Activated naive CD4-positive, alpha-beta T cell treated with anti-CD3 and anti-CD28 coated beads for 36 hours (primary cell): ENCODE measurements at regions of chr11 and their contacts with region 1.

Region 1: GRCh38 chr11:36289226-36289852 is at the start of gene COMMD9:
- DNase-seq: peak; percentile 98
- H3K4me3 Mint-ChIP-seq: peak within 1 kb of the TSS; percentile 91
- H3K27ac Mint-ChIP-seq: peak within 1 kb of the TSS; percentile 78
- H3K4me1 Mint-ChIP-seq: peaks cover 34% of the 10 kb centered on the region
- H3K27me3 Mint-ChIP-seq: no peaks in the 10 kb centered on the region
- total RNA-seq, gene COMMD9: 28.9 to 30.9 TPM

Region 2: GRCh38 chr11:35927730-35928129 is 361.6 kb before region 1 on chr11:
- CTCF ChIA-PET with region 1: no interaction called
- intact Hi-C with region 1: no loop called
- DNase-seq: no peak
- H3K4me3 Mint-ChIP-seq: no peak overlapping the region
- H3K27ac Mint-ChIP-seq: no peak overlapping the region
- H3K4me1 Mint-ChIP-seq: no peaks in the 10 kb centered on the region
- H3K27me3 Mint-ChIP-seq: peaks cover 16% of the 10 kb centered on the region

Region 3: DNA sequence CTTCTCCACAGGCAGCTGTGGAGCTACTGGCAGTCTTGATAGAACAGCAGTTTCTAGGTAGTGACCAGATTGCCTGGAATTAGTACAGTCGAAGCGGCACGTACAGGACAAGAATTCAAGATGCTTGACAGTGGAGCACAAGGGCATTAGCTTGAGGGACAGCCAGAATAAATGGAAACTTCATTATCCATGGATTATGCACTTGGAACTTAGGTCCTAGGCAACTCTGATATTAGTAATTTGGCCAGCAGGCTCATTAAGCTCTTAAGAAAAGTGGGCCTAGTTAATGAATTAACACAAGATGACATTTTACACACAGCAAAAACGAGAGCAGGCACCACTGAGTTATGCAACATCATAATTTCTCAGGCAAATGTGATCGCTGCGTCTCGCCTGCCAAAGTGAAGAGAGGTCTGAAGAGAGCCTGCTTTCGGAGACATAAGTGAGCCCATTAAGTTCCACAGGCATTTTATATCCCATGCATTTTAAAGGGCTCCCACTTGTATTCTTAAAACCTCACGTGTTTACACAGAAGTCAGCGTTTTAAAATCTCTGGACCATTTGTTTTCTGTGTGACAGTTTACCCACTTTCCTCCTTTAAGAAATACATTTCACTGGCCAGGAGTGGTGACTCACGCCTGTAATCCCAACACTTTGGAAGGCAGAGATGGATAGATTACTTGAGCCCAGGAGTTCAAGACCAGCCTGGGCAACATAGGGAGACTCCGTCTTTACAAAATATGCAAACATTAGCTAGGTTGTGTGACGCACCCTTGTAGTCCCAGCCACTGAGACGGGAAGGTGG is 66.3 kb before region 1 on chr11:
- CTCF ChIA-PET with region 1: no interaction called
- intact Hi-C with region 1: no loop called
- DNase-seq: no peak
- H3K4me3 Mint-ChIP-seq: no peak overlapping the region
- H3K27ac Mint-ChIP-seq: no peak overlapping the region
- H3K4me1 Mint-ChIP-seq: no peaks in the 10 kb centered on the region
- H3K27me3 Mint-ChIP-seq: peaks cover 4% of the 10 kb centered on the region

Region 4: DNA sequence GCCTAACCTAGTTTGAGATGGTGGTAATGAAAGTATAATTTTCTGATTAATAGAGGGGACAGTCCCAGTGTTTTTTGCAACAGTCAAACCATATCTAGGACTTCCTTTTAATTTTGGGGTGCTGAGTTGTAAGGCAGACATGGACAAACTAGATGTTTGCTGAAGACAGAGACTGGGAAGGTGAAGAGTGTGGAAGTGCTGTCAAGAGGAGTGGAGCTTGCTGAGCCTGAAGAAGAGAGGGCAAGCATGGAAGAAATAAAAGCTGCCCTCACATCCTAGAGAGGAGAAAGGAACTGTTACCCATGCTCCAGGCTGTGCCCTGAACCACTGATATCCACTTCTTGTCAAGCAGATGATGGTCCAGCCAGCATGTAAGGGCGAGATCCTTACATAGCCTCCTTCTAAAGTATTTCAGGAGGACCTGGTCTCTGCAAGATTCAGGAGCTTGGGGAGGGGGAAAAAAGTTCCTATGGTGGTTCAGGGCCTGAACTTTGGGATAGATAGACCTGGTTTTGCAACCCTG is 58.1 kb after region 1 on chr11:
- CTCF ChIA-PET with region 1: interaction called, 5 read pairs
- intact Hi-C with region 1: loop called (anchors 1 kb)
- DNase-seq: no peak
- H3K4me3 Mint-ChIP-seq: no peak overlapping the region
- H3K27ac Mint-ChIP-seq: peak overlapping the region; percentile 73
- H3K4me1 Mint-ChIP-seq: peaks cover 48% of the 10 kb centered on the region
- H3K27me3 Mint-ChIP-seq: peaks cover 18% of the 10 kb centered on the region

Region 5: GRCh38 chr11:36361901-36362391 is 72.6 kb after region 1 on chr11:
- CTCF ChIA-PET with region 1: no interaction called
- intact Hi-C with region 1: no loop called
- DNase-seq: no peak
- H3K4me3 Mint-ChIP-seq: no peak overlapping the region
- H3K27ac Mint-ChIP-seq: no peak overlapping the region
- H3K4me1 Mint-ChIP-seq: peaks cover 12% of the 10 kb centered on the region
- H3K27me3 Mint-ChIP-seq: peaks cover 45% of the 10 kb centered on the region

Region 6: DNA sequence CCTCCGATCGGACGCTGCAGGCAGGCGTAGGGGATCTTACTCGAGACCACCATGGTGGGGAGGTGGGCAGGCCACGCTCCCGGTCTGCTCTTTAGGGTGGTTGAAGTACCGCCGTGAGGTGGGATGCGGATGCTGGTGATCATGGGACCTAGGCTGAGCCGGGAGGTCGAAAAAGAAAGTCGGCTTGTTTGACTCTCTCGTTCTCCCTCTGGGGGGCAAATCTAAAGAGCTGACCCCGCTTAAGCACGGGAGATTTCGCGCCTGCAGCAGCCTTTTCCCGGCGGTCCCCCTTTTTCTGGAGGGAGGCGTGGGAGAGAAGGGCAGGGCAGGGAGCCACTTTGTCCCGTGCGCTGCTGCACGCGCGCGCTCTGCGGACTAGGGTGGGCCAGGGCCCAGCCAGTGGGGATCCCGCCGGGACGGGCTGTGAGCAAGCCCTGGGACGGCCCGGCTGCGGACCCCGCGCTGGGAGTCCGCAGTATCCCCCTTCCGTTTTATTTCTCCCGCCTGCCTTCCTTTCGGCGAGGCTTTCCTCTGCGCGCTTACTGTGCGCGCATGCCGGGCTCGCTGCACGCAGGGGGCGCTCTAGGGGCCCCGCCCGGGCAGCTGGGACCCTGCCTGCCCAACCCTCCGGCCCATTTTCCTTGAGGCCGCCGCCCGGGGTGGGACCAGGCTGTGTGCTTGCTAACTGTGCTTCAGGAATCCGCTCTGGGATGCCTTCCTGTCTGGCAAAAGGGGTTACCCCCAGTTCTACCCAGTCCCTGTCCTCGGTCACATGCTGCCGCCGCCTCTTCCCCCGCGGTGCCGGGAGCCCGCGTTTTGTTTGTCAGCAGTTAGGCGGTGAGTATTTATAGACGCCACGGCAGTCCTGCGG is 87.8 kb after region 1 on chr11:
- CTCF ChIA-PET with region 1: interaction called, 11 read pairs
- intact Hi-C with region 1: no loop called
- DNase-seq: peak; percentile 60
- H3K4me3 Mint-ChIP-seq: peak overlapping the region; percentile 85
- H3K27ac Mint-ChIP-seq: no peak overlapping the region
- H3K4me1 Mint-ChIP-seq: peaks cover 24% of the 10 kb centered on the region
- H3K27me3 Mint-ChIP-seq: peaks cover 64% of the 10 kb centered on the region

Region 7: GRCh38 chr11:36492724-36493304 is 203.5 kb after region 1 on chr11:
- CTCF ChIA-PET with region 1: interaction called, 98 read pairs
- intact Hi-C with region 1: loop called (anchors 1 kb)
- DNase-seq: peak; percentile 44
- H3K4me3 Mint-ChIP-seq: no peak overlapping the region
- H3K27ac Mint-ChIP-seq: peak overlapping the region; percentile 28
- H3K4me1 Mint-ChIP-seq: peaks cover 22% of the 10 kb centered on the region
- H3K27me3 Mint-ChIP-seq: no peaks in the 10 kb centered on the region

Region 8: DNA sequence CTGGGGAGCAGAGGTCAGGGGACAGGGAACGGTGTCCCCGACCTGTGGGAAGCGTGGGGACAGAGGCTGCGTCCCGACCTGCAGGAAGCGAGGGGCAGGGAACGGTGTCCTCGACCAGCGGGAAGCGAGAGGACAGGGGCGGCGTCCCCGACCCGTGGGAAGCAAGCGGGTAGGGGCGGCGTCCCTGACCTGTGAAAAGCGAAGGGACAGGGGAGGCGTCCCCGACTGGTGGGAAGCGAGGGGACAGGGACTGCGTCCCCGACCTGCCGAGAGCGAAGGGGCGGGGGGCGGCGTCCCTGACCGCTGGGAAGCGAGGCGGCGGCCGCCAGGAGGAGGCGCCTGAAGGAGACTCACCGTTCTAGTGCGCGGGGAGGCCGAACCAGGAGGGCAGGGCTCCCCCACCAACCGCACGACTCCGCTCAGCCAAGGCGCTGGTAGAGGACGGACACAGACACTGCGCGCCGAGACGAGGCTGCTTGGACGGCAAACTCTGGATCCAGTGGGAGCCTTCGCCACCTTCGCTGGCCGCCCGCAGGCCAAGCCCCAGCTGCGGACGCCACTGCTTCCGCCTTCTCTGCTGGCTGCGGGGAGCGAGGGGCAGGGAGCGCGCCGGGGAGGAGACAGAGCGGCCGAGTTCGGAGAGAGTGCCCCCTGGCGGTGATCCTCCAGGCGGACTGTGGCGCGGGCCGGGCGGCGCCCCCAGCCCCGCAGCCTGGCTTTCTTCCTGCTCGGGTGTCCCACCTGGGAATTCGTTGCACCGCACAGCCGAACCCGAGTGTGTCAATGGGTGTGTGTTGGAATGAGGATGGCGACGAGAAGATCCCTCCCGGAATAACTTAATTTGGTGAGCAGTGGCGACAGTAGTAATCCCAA is 220.6 kb after region 1 on chr11 and contains the start of gene TRAF6:
- CTCF ChIA-PET with region 1: interaction called, 18 read pairs
- intact Hi-C with region 1: loop called (anchors 1 kb)
- DNase-seq: peak; percentile 91
- H3K4me3 Mint-ChIP-seq: peak within 1 kb of the TSS; percentile 97
- H3K27ac Mint-ChIP-seq: peak within 1 kb of the TSS; percentile 90
- H3K4me1 Mint-ChIP-seq: peaks cover 30% of the 10 kb centered on the region
- H3K27me3 Mint-ChIP-seq: no peaks in the 10 kb centered on the region
- total RNA-seq, gene TRAF6: 8.3 to 8.7 TPM

Region 9: GRCh38 chr11:36672813-36673450 is 383.6 kb after region 1 on chr11:
- CTCF ChIA-PET with region 1: no interaction called
- intact Hi-C with region 1: loop called (anchors 1 kb)
- DNase-seq: peak; percentile 14
- H3K4me3 Mint-ChIP-seq: no peak overlapping the region
- H3K27ac Mint-ChIP-seq: no peak overlapping the region
- H3K4me1 Mint-ChIP-seq: no peaks in the 10 kb centered on the region
- H3K27me3 Mint-ChIP-seq: peaks cover 21% of the 10 kb centered on the region